K562 (cell line): ENCODE measurements at regions of chr3 and their contacts with region 1.

Region 1: DNA sequence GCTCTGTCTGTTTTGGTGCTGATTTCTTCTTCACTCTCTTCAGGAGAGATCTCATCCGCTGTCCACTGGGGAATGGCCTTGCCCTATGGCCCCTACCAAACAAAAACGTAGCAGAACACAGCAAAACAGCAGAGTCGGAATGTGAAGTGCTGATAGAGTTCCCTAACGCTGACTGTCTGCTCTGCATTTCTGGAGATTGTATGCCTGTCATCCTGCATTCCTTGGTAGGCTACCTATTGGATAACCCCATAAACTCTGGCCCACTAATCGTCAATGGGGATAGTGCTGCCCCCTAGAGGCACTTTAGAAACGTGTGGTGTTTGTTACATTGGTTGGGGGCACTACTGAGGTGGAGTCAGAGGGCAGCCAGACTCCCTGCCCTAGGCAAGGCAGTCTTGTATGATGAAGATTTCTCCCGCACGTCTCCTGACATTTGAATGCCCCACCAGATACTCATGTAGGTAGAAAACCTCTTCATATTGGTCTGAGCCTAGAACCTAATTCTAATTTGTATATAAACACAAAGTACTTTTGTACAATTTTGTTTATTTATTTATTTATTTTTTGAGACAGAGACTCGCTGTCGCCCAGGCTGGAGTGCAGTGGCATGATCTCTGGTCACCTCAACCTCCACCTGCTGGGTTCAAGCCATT is 15.6 kb upstream of the MAGEF1 start:
- DNase-seq: peak; percentile 72 to 79 (median 73)
- ATAC-seq: peak; percentile 97
- H3K4me3 ChIP-seq: no peak overlapping the region
- H3K27ac ChIP-seq: no peak overlapping the region
- H3K4me1 ChIP-seq: no peaks in the 10 kb centered on the region
- H3K27me3 ChIP-seq: peaks cover 14 to 31% of the 10 kb centered on the region in 2 experiments; a peak in 4 of 5 replicates
- CTCF ChIP-seq: peak; percentile 78 to 92 (median 80)
- EP300 ChIP-seq: no peak
- POLR2A ChIP-seq: no peak
- RAD21 ChIP-seq: peak; percentile 23 to 69; a peak in 3 of 4 replicates

Region 2: DNA sequence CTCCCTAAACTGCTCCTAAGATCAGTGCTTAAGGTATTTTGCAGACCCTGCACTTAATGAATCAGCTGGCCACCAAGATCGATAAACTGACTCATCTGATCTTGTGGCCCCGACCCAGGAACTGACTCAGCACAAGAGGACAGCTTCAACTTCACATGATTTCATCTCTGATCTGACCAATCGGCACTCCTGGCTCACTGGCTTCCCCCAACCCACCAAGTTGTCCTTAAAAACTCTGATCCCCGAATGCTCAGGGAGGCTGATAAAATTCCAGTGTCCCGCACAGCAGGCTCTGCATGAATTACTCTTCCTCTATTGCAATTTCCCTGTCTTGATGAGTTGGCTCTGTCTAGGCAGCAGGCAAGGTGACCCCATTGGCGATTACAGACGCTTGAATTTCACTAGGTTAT is 617.2 kb before region 1 on chr3:
- CTCF ChIA-PET with region 1: no interaction called
- POLR2A ChIA-PET with region 1: no interaction called
- in situ Hi-C with region 1: no loop called
- intact Hi-C with region 1: no loop called
- DNase-seq: peak in 1 of 4 experiments; percentile 68
- ATAC-seq: peak; percentile 78
- H3K4me3 ChIP-seq: no peak overlapping the region
- H3K27ac ChIP-seq: no peak overlapping the region; the same call in 2 of the 3 replicates
- H3K4me1 ChIP-seq: peaks cover 0 to 3% of the 10 kb centered on the region in 2 experiments; a peak in 2 of 5 replicates
- H3K27me3 ChIP-seq: no peaks in the 10 kb centered on the region
- CTCF ChIP-seq: no peak
- EP300 ChIP-seq: peak; percentile 66
- POLR2A ChIP-seq: no peak
- RAD21 ChIP-seq: no peak

Region 3: DNA sequence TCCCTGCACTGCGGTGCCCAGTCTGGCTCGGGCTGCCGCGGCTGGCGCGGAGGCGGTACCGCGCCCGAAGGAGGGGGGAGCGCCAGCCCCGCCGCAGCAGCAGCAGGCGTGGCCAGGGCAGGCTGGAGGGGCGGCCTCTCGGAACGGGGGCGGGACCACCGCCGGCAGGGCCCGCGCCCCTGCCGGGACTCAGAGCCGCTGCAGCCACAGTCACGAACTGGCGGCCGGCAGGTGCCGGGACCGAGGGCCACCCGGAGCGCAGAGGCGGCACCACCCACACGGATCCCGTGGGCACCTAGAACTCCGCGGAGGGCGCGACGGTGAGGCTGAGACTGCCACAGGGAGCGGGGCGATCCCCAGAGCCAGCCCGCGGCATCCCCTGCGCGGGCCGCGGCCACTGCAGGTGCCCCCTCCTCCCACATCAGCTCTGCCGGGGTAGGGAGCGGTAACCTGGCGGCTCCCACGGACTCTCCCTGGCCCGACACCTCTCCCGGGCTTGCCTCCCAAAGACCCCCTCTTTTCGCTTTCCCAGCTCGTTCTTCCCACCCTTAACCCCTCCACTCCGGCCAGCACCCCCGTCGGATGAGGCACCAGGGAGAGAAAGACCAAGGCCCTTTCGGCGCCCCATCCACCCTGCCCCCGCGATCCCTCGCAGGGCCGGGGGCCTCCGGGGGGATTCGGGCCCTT is 497.9 kb before region 1 on chr3 and contains the start of gene VWA5B2:
- CTCF ChIA-PET with region 1: no interaction called
- POLR2A ChIA-PET with region 1: no interaction called
- in situ Hi-C with region 1: no loop called
- intact Hi-C with region 1: no loop called
- DNase-seq: peak; percentile 66 to 96 (median 92)
- ATAC-seq: peak; percentile 92
- H3K4me3 ChIP-seq: no peak within 1 kb of the TSS
- H3K27ac ChIP-seq: no peak within 1 kb of the TSS
- H3K4me1 ChIP-seq: peaks cover 0 to 32% of the 10 kb centered on the region in 2 experiments; a peak in 3 of 5 replicates
- H3K27me3 ChIP-seq: peaks cover 47 to 68% of the 10 kb centered on the region in 2 experiments
- CTCF ChIP-seq: peak in 1 of 3 experiments; percentile 43; a peak in 1 of 6 replicates
- EP300 ChIP-seq: no peak
- POLR2A ChIP-seq: no peak
- RAD21 ChIP-seq: no peak
- polyA plus RNA-seq, gene VWA5B2: not detected

Region 4: GRCh38 chr3:184491867-184492615 is 235.4 kb before region 1 on chr3:
- CTCF ChIA-PET with region 1: no interaction called
- POLR2A ChIA-PET with region 1: no interaction called
- in situ Hi-C with region 1: no loop called
- intact Hi-C with region 1: no loop called
- DNase-seq: no peak
- ATAC-seq: no peak
- H3K4me3 ChIP-seq: no peak overlapping the region
- H3K27ac ChIP-seq: no peak overlapping the region
- H3K4me1 ChIP-seq: peaks cover 0 to 8% of the 10 kb centered on the region in 2 experiments; a peak in 1 of 5 replicates
- H3K27me3 ChIP-seq: peaks cover 22 to 46% of the 10 kb centered on the region in 2 experiments
- CTCF ChIP-seq: no peak
- EP300 ChIP-seq: no peak
- POLR2A ChIP-seq: no peak
- RAD21 ChIP-seq: no peak

Region 5: GRCh38 chr3:184583578-184584425 is 143.7 kb before region 1 on chr3:
- CTCF ChIA-PET with region 1: no interaction called
- POLR2A ChIA-PET with region 1: no interaction called
- in situ Hi-C with region 1: no loop called
- intact Hi-C with region 1: loop called (anchors 5 kb)
- DNase-seq: peak in 3 of 4 experiments; percentile 13 to 59 (median 52)
- ATAC-seq: peak; percentile 56
- H3K4me3 ChIP-seq: no peak overlapping the region
- H3K27ac ChIP-seq: no peak overlapping the region
- H3K4me1 ChIP-seq: peaks cover 0 to 14% of the 10 kb centered on the region in 2 experiments; a peak in 2 of 5 replicates
- H3K27me3 ChIP-seq: peaks cover 40 to 81% of the 10 kb centered on the region in 2 experiments
- CTCF ChIP-seq: peak in 2 of 3 experiments; percentile 23 to 39; a peak in 3 of 6 replicates
- EP300 ChIP-seq: no peak
- POLR2A ChIP-seq: no peak
- RAD21 ChIP-seq: no peak